CD4-positive, alpha-beta T cell (primary cell): ENCODE measurements at regions of chr1 and their contacts with region 1.

Region 1: DNA sequence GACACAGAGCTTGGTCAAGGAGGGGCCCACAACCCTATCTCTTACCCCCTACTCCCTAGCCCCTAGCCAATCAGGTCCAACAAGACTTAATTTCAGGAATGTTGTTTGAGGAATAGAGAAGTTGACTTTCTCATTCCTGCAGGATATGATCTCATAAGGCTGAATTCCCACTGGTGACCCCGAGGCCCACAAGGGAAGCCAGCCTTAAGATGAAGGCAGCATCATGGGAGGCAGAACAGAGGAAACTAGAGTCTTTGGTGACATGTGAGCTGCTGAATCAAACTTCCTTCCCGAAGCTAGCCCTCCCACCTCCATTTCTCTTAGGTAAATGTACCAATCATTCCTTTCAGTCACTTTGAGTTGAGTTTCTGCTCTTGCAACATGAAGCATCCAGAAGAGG is 9.1 kb upstream of the PDIK1L start:
- DNase-seq: no peak
- ATAC-seq: no peak
- H3K4me3 ChIP-seq: no peak overlapping the region
- H3K4me3 Mint-ChIP-seq: no peak overlapping the region
- H3K27ac ChIP-seq: no peak overlapping the region
- H3K27ac Mint-ChIP-seq: no peak overlapping the region
- H3K4me1 ChIP-seq: peaks cover 5% of the 10 kb centered on the region
- H3K4me1 Mint-ChIP-seq: peaks cover 6% of the 10 kb centered on the region
- H3K27me3 ChIP-seq: no peaks in the 10 kb centered on the region
- H3K27me3 Mint-ChIP-seq: no peaks in the 10 kb centered on the region
- CTCF ChIP-seq: no peak

Region 2: DNA sequence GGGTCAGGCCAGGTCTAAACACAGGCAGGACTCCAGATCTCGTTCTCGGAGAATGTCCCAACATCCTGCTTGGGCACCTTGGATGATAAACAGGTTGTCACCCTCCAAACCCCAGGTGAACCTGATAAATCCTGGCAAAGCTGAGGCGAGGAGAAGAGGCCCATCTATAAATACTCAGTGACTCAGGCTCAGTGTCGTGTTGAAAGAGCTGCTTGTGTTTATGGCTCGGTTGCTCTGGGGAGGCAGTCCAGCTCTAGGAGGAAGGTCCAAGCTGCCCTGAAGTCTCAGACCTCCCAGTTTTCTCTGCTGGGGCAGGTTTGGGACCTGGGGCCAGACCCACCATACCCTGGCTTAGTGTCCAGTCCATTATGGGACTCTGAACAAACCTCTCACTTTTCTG is 19.3 kb before region 1 on chr1:
- CTCF ChIA-PET with region 1: no interaction called
- POLR2A ChIA-PET with region 1: no interaction called
- intact Hi-C with region 1: no loop called
- DNase-seq: no peak
- ATAC-seq: no peak
- H3K4me3 ChIP-seq: no peak overlapping the region
- H3K4me3 Mint-ChIP-seq: no peak overlapping the region
- H3K27ac ChIP-seq: no peak overlapping the region
- H3K27ac Mint-ChIP-seq: no peak overlapping the region
- H3K4me1 ChIP-seq: no peaks in the 10 kb centered on the region
- H3K4me1 Mint-ChIP-seq: no peaks in the 10 kb centered on the region
- H3K27me3 ChIP-seq: peaks cover 0 to 15% of the 10 kb centered on the region in 2 experiments
- H3K27me3 Mint-ChIP-seq: peaks cover 24% of the 10 kb centered on the region
- CTCF ChIP-seq: no peak

Region 3: DNA sequence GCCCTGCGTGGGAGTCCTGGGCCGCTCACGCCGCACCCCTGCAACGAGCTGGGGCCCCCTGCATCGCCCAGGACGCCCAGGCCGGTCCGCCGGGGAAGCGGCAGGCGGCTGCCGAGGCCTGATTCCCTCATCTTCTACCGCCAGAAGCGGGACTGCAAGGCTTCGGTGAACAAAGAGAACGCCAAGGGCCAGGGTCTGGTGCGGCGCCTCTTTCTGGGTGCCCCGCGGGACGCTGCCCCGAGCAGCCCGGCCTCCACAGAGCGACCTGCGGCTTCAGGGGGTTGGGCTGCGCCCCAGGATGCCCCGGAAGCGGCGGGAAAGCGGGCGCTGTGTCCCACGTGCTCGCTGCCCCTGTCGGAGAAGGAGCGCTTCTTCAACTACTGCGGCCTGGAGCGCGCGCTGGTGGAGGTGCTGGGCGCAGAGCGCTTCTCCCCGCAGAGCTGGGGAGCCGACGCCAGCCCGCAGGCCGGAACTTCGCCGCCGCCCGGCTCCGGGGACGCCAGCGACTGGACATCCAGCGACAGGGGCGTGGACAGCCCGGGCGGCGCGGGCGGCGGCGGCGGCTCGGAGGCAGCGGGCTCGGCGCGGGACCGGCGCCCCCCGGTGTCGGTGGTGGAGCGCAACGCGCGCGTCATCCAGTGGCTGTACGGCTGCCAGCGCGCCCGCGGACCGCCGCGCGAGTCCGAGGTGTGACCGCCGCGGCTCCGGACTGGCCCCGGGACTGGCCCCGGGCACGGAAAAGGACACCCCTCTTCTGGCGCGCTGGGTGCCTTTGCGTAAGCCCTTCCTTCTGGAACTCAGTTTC is 59.1 kb after region 1 on chr1:
- CTCF ChIA-PET with region 1: no interaction called
- POLR2A ChIA-PET with region 1: no interaction called
- intact Hi-C with region 1: loop called (anchors 1 kb)
- DNase-seq: peak in 10 of 14 experiments; percentile 16 to 65 (median 32)
- ATAC-seq: peak; percentile 63
- H3K4me3 ChIP-seq: peak overlapping the region; percentile 12
- H3K4me3 Mint-ChIP-seq: peak overlapping the region; percentile 58
- H3K27ac ChIP-seq: no peak overlapping the region
- H3K27ac Mint-ChIP-seq: no peak overlapping the region
- H3K4me1 ChIP-seq: peaks cover 29% of the 10 kb centered on the region
- H3K4me1 Mint-ChIP-seq: peaks cover 5% of the 10 kb centered on the region
- H3K27me3 ChIP-seq: peaks cover 26 to 44% of the 10 kb centered on the region in 2 experiments
- H3K27me3 Mint-ChIP-seq: peaks cover 39% of the 10 kb centered on the region
- CTCF ChIP-seq: no peak